PC-3 (cell line): ENCODE measurements at regions of chr10 and their contacts with region 1.

Region 1: DNA sequence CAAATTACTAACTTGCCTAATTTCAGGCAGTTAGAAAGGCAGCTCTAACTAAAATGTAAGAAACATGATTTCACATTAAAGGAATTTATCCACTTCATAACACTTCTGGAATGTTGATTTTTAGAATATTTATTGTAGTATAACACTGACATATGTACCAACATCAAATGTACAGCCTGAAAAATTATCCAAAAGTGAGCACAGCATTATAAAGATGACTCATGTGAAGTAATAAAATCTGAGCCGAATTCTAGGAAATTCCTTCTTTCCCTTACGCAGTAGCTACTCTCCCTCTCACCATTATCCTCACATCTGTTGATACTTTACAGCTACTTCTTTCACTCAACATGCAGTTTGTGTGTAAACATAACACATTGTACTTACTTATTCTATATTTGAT is 610.6 kb downstream of the ZWINT start:
- DNase-seq: peak; percentile 70
- ATAC-seq: peak; percentile 93
- H3K4me3 ChIP-seq: no peak overlapping the region
- H3K27ac ChIP-seq: no peak overlapping the region
- H3K4me1 ChIP-seq: no peaks in the 10 kb centered on the region
- H3K27me3 ChIP-seq: no peaks in the 10 kb centered on the region
- CTCF ChIP-seq: no peak

Region 2: GRCh38 chr10:55466806-55467504 is 283.5 kb before region 1 on chr10:
- CTCF ChIA-PET with region 1: no interaction called
- POLR2A ChIA-PET with region 1: no interaction called
- intact Hi-C with region 1: no loop called
- DNase-seq: no peak
- ATAC-seq: no peak
- H3K4me3 ChIP-seq: no peak overlapping the region
- H3K27ac ChIP-seq: no peak overlapping the region
- H3K4me1 ChIP-seq: no peaks in the 10 kb centered on the region
- H3K27me3 ChIP-seq: no peaks in the 10 kb centered on the region
- CTCF ChIP-seq: no peak

Region 3: DNA sequence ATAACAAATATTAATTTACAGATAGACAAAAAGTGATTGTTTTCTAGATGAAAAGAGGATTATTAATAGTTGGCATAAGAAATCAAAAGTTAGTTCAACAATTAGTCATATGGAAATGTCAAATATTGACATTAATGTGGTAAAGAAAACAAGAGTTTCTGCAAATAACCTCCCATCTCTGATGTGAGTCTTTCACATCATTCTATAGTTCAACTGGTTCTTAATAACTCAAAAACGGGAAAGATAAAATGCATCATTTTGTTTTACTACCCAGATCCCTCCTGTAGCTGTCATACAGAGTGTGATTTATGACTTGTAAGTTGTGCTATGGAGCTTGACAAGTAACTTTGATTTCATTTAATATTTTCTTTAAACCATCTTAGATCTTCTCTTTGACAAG is 15.8 kb after region 1 on chr10:
- CTCF ChIA-PET with region 1: no interaction called
- POLR2A ChIA-PET with region 1: no interaction called
- intact Hi-C with region 1: loop called (anchors 2 kb)
- DNase-seq: peak; percentile 61
- ATAC-seq: peak; percentile 97
- H3K4me3 ChIP-seq: no peak overlapping the region
- H3K27ac ChIP-seq: no peak overlapping the region
- H3K4me1 ChIP-seq: 0 out of 2 replicates have a peak, but pooled peaks cover 3% of the 10 kb centered on the region
- H3K27me3 ChIP-seq: no peaks in the 10 kb centered on the region
- CTCF ChIP-seq: no peak